Naive thymus-derived CD4-positive, alpha-beta T cell (primary cell): ENCODE measurements at regions of chr5 and their contacts with region 1.

Region 1: DNA sequence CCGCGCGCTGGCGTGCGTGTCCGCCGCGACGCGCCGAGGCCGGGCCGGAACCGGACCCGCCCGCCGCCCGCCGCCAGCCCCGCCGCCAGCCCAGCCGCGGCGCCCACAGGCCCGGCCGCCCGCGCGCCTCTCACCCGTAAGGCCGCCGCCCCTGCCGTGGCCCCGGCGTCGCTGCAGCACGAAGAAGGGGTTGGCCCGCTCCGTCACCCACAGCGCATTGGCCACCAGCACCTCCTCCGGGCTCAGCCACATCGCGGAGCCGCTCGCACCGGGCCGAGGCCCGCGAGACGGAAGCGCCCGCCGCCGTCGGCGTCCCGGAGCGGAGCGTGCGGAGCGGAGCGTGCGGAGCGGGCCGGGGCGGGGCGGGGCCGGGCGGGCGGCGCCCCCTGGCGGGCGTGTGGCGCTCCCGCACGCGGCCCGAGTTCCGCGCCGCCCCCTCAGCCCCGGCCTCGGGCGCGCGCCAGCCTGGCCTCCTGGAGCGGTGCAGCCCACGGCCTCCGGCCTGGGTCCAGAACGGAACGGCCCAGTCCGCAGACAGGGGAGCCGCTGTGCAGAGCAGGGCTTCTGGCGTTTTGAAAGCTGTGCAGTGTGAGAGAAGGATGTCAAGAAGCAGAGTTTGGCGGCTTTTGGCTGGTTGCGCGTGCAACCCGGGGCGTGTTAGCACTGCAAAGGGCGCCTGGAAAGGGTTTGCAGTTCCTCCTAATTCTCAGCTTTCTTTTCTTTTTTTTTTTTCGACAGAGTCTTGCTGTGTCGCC is at the start of gene TBC1D9B:
- DNase-seq: peak; percentile 68 to 81 (median 73)
- ATAC-seq: peak; percentile 95
- H3K4me3 ChIP-seq: peak within 1 kb of the TSS; percentile 64
- H3K4me3 Mint-ChIP-seq: peak within 1 kb of the TSS; percentile 78 to 92 (median 90)
- H3K27ac ChIP-seq: peak within 1 kb of the TSS; percentile 56
- H3K27ac Mint-ChIP-seq: peak within 1 kb of the TSS; percentile 42 to 91 (median 85)
- H3K4me1 ChIP-seq: peaks cover 13 to 14% of the 10 kb centered on the region in 2 donors
- H3K4me1 Mint-ChIP-seq: peaks cover 7 to 40% (median 23%) of the 10 kb centered on the region in 7 donors
- H3K27me3 ChIP-seq: no peaks in the 10 kb centered on the region
- H3K27me3 Mint-ChIP-seq: no peaks in the 10 kb centered on the region
- total RNA-seq, gene TBC1D9B: 71.3 to 117 (median 86.9) TPM

Region 2: DNA sequence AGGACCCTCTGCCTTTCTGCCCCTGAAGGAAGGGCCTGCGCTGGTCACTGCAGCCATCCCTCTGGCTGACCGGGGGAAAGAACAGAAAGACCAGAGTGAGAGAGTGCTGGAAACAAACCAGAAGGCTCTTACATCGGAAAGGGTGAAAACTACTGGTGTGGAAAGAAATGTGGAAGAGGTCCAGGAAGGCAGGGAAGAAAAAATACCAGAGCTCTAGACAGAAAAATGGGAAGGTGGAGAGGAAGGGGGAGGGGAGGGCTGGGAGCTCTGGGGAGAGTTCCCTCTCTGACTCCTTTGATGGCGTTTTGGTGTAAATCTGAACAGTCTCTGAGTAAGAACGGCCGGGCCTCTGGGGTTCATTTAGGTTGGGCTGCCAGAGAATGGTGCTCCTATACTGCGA is 1365.3 kb before region 1 on chr5:
- CTCF ChIA-PET with region 1: no interaction called
- POLR2A ChIA-PET with region 1: no interaction called
- intact Hi-C with region 1: no loop called
- DNase-seq: no peak
- ATAC-seq: no peak
- H3K4me3 ChIP-seq: no peak overlapping the region
- H3K4me3 Mint-ChIP-seq: no peak overlapping the region
- H3K27ac ChIP-seq: no peak overlapping the region
- H3K27ac Mint-ChIP-seq: no peak overlapping the region
- H3K4me1 ChIP-seq: no peaks in the 10 kb centered on the region
- H3K4me1 Mint-ChIP-seq: no peaks in the 10 kb centered on the region
- H3K27me3 ChIP-seq: no peaks in the 10 kb centered on the region
- H3K27me3 Mint-ChIP-seq: peaks cover 0 to 4% (median 0%) of the 10 kb centered on the region in 5 donors

Region 3: DNA sequence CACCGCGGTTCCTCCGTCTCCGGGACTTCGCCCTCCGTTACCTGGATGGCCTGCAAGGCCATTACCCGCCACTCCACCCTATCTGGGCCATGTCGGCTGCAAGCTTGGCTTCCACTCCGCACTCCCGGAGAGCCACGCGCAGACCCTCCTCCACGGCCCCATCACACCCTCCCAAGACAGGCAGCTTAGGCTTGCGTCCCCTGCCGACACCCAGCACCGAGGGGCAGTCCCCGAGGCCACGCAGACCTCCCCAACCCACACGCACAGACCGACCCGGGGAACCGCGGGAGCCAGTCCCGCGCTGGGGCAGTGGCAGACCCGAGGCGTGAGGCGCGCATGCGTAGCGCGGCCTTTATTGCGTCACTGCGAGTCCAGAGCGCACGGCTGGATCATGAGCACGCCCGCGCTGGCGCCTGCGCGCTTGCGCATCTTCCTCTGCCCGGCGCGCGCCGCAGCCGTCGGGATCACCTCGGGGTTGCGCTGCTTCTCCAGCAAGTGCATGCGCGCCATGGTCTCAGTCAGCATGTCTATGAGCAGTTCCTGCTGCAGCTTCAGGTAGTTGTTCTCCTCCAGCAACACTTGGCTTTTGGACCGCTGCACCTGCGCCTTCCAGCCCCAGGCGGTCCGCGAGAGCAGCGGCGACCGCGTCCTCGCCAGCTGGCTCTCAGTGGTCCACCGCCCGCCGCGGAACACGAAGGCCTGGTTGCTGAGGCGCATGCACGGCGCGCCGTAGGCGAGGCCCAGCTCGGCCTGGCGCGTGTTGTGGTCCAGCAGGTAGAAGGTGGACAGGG is 229.3 kb before region 1 on chr5:
- CTCF ChIA-PET with region 1: no interaction called
- POLR2A ChIA-PET with region 1: no interaction called
- intact Hi-C with region 1: loop called (anchors 1 to 5 kb)
- DNase-seq: peak; percentile 88 to 95 (median 92)
- ATAC-seq: peak; percentile 91
- H3K4me3 ChIP-seq: peak overlapping the region; percentile 99
- H3K4me3 Mint-ChIP-seq: peak overlapping the region; percentile 95 to 99 (median 98)
- H3K27ac ChIP-seq: peak overlapping the region; percentile 87
- H3K27ac Mint-ChIP-seq: peak overlapping the region; percentile 89 to 99 (median 97)
- H3K4me1 ChIP-seq: peaks cover 4 to 5% of the 10 kb centered on the region in 2 donors
- H3K4me1 Mint-ChIP-seq: peaks cover 15 to 39% (median 30%) of the 10 kb centered on the region in 7 donors
- H3K27me3 ChIP-seq: no peaks in the 10 kb centered on the region
- H3K27me3 Mint-ChIP-seq: peaks cover 0 to 5% (median 0%) of the 10 kb centered on the region in 5 donors

Region 4: GRCh38 chr5:179806250-179807222 is 101.2 kb before region 1 on chr5 and contains the start of gene MGAT4B:
- CTCF ChIA-PET with region 1: interaction called, 10 read pairs
- POLR2A ChIA-PET with region 1: interaction called, 6 read pairs
- intact Hi-C with region 1: loop called (anchors 1 to 2 kb)
- DNase-seq: peak in 8 of 9 donors; percentile 28 to 81 (median 57)
- ATAC-seq: peak; percentile 84
- H3K4me3 ChIP-seq: peak within 1 kb of the TSS; percentile 41
- H3K4me3 Mint-ChIP-seq: peak within 1 kb of the TSS; percentile 46 to 87 (median 80)
- H3K27ac ChIP-seq: peak within 1 kb of the TSS; percentile 73
- H3K27ac Mint-ChIP-seq: peak within 1 kb of the TSS in 5 of 9 donors; percentile 22 to 85 (median 70)
- H3K4me1 ChIP-seq: peaks cover 19 to 26% of the 10 kb centered on the region in 2 donors
- H3K4me1 Mint-ChIP-seq: peaks cover 24 to 41% (median 33%) of the 10 kb centered on the region in 7 donors
- H3K27me3 ChIP-seq: no peaks in the 10 kb centered on the region
- H3K27me3 Mint-ChIP-seq: no peaks in the 10 kb centered on the region
- total RNA-seq, gene MGAT4B: 98.3 to 143 (median 118) TPM

Region 5: DNA sequence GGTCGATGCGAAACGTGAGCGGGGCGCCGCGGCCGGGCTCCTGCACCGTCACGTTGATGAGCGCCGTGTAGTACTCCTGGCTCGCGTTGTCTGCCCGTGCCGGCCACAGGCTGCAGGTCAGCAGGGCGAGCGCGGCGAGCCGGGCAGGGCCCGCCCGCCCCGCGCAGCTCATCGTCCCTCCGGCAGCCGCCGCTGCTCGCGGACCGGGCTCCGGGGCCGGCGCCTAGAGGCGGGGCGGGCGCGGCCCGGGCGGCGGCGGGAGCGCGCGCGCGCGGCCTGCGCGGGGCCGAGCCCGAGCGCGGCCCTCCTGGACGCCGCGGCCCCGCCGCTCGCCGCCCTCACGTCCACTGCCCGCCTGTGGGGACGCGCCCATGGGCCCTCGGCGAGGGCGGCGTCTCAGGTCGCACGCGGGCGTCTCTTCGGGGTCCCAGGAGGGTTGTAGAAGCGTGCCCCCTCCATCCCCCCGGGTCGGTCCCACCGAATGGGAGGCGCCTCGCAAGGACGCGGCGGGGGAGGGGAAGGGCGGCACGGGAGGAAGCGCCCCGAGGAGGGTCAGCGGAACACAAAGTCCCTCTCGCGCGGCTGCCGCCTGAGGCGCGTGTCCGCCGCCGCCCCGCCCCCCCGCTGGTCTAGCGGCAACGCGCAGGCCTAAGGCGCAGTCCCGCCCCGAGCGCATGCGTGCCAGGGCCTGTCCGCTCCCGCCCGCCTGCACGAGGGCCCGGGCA is 163.9 kb after region 1 on chr5 and contains the start of gene RNF130:
- CTCF ChIA-PET with region 1: no interaction called
- POLR2A ChIA-PET with region 1: interaction called, 3 read pairs
- intact Hi-C with region 1: loop called (anchors 5 kb)
- DNase-seq: peak; percentile 64 to 91 (median 77)
- ATAC-seq: peak; percentile 88
- H3K4me3 ChIP-seq: peak within 1 kb of the TSS; percentile 62
- H3K4me3 Mint-ChIP-seq: peak within 1 kb of the TSS; percentile 80 to 93 (median 91)
- H3K27ac ChIP-seq: peak within 1 kb of the TSS; percentile 76
- H3K27ac Mint-ChIP-seq: peak within 1 kb of the TSS in 8 of 9 donors; percentile 78 to 95 (median 90)
- H3K4me1 ChIP-seq: peaks cover 6 to 21% of the 10 kb centered on the region in 2 donors
- H3K4me1 Mint-ChIP-seq: peaks cover 10 to 47% (median 38%) of the 10 kb centered on the region in 7 donors
- H3K27me3 ChIP-seq: no peaks in the 10 kb centered on the region
- H3K27me3 Mint-ChIP-seq: peaks cover 0 to 50% (median 0%) of the 10 kb centered on the region in 5 donors
- total RNA-seq, gene RNF130: 3.6 to 76.3 (median 23.3) TPM